Panc1 (cell line): ENCODE measurements at regions of chr3 and their contacts with region 1.

Region 1: DNA sequence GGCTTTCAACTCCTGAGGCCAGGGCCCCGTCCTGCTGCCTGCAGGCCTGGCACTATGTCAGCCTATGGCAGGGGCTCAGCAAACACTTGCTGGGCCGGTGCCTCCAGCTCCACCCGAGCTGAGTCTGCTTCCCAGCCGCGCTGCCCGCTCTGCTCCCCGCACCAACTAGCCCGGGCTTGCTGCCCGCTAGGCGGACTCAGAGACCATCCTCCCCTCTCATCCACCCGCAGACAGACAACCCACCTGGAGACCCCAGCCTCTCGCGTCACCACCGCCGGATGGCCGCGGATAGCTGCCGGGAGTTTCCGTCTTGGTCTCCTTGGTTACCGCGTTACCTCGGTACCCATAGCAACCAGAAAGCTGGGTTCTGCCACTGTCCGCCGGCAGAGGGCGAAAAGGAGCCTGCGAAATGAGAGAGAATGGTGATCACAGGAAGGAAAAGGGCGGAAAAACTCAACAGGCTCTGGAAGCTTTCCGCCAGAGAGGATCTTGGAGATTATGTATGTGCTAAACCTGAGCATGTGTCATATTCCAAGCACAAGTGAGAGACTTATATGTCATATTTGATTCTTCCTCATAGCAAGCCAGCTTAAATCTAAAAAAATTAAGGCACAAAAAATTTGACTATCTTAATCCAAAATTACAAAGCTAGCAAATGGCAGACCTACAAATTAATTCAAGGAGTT is at the start of gene ZBBX:
- DNase-seq: peak; percentile 67
- ATAC-seq: peak; percentile 98
- H3K4me3 ChIP-seq: peak within 1 kb of the TSS; percentile 37 to 39
- H3K27ac ChIP-seq: no peak within 1 kb of the TSS
- H3K4me1 ChIP-seq: no peaks in the 10 kb centered on the region
- H3K27me3 ChIP-seq: no peaks in the 10 kb centered on the region; the same call in 1 of the 2 replicates
- CTCF ChIP-seq: peak; percentile 95
- total RNA-seq, gene ZBBX: not detected

Region 2: DNA sequence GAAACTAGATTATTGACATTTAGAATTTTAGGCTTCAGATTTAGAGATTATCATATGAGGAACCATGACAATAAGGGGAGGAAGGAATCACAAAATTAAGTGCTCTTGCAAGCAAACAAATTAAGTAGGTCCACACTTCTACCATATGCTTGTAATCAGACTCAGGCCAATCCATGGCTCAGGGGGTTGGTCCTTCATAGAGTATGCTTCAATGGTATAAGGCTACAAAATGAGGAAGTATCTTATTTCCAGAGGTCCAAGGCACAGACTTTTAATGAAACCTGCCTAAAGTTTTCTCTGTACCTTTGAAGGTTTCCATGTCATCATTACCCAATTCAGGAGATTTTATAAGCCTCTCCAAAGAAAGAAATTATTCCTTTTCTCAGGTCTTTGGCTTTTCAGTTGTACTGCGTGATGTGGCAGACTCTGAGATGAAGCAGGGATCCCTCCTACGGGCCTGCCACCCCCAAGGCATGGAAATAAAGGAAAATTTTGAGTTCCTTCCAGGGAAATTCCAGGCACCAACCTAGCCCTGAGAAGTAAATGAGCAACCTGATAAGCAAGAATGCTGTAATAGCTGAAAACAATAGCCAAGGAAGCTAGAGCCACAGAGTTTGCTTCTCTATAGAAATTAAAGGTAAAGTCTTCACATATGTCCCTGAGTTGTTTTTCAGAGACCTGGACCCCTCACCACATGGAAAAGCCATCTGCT is 57.4 kb after region 1 on chr3:
- CTCF ChIA-PET with region 1: no interaction called
- POLR2A ChIA-PET with region 1: no interaction called
- in situ Hi-C with region 1: no loop called
- intact Hi-C with region 1: no loop called
- DNase-seq: no peak
- ATAC-seq: no peak
- H3K4me3 ChIP-seq: no peak overlapping the region
- H3K27ac ChIP-seq: no peak overlapping the region
- H3K4me1 ChIP-seq: no peaks in the 10 kb centered on the region
- H3K27me3 ChIP-seq: no peaks in the 10 kb centered on the region
- CTCF ChIP-seq: no peak

Region 3: DNA sequence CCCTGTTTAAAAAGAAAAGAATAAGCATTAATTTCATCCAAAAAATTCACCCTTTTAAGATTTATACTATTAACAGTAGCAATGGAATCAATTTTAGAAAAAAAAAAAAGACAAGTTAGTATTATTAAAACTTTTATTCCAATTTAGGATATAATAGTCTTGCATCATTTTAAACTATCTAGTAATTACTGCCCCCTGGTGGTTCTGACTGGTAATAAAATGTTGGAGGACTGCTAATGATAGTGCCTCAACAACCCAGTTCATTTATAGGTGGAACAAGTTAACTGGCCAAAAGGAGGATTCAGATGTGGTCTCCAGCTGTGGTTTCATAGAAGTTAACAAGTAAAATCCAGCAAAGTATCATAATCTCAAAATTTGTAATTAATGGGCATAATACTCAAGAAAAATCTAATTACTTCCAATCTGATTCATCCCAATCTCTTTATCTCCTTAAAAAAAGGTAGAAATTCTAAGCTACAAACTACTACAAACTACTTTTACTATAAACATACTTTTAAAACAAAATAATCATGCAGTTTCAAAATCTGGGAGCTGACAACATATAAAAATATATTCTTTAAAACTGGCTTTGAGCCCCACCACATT is 304.3 kb after region 1 on chr3:
- CTCF ChIA-PET with region 1: interaction called, 3 read pairs
- POLR2A ChIA-PET with region 1: no interaction called
- in situ Hi-C with region 1: no loop called
- intact Hi-C with region 1: loop called (anchors 2 kb)
- DNase-seq: peak; percentile 54
- ATAC-seq: peak; percentile 89
- H3K4me3 ChIP-seq: no peak overlapping the region
- H3K27ac ChIP-seq: no peak overlapping the region
- H3K4me1 ChIP-seq: no peaks in the 10 kb centered on the region
- H3K27me3 ChIP-seq: no peaks in the 10 kb centered on the region
- CTCF ChIP-seq: peak; percentile 79; the same call in 1 of the 2 replicates

Region 4: DNA sequence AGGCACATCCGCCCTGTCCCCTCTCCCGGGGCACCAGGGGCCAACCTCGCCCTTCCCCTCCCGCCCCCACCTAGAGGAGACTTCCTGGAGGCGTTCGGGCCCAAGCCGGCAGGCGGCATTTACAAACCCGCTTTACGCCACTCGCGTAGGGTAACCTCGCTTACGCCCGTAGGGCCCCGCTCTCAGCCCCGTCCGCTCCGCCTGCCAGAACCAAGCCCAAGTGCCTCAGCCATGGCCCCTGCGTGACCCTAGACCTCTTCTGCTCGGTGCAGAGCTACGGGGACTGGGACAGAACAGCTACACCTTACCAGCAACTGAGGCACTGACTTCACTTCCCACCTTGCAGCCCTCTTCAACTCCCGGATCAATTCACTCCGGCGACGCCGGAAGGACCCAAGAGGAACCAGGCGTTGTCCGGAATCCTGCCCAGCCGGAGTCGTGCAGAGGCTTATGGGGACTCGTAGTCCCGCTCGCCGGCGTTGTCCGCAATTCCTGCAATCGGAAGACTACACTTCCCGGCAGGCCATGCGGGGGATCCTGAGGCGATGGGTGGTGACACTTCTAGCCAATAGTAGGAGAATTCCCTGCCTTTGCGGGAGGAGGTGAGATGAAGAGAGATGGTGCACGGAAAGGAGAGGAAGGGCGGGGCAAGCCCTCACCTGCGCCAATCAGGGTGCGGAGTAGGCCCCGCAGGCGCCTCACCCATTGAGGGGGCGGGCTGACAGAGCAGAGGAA is 354.5 kb after region 1 on chr3 and contains the start of gene PDCD10:
- CTCF ChIA-PET with region 1: no interaction called
- POLR2A ChIA-PET with region 1: no interaction called
- in situ Hi-C with region 1: no loop called
- intact Hi-C with region 1: no loop called
- DNase-seq: peak; percentile 97
- ATAC-seq: peak; percentile 95
- H3K4me3 ChIP-seq: peak within 1 kb of the TSS; percentile 91 to 94
- H3K27ac ChIP-seq: peak within 1 kb of the TSS; percentile 94
- H3K4me1 ChIP-seq: peaks cover 37% of the 10 kb centered on the region
- H3K27me3 ChIP-seq: no peaks in the 10 kb centered on the region
- CTCF ChIP-seq: no peak
- total RNA-seq, gene PDCD10: 83.5 TPM

Region 5: DNA sequence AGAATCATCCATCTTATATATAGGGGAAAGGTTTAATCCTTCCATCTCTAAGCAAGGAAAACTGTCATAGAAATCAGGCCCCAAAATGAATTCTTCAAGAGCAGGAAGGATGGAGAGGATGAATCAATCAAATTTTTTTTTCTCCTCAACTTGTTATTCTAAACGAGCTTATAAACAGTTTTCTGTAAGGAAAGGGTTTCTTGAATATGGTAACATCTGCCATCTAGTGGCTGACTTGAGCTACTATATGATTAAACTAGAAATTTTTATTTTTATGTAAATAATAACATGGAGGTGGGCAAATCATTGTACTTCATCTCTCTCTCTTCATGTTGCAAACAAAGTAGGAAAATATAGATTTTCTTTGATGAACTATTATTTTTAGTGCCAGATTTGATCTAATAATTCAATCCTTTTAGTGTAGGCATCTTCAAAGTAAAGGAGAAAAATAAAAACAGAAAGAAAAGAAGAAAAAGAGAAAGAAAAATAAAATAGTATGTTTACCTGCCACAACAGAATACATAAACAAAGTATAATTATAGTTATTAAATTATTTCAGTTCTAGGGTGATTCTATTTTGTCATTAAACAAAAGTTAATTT is 502.0 kb after region 1 on chr3:
- CTCF ChIA-PET with region 1: interaction called, 5 read pairs
- POLR2A ChIA-PET with region 1: no interaction called
- in situ Hi-C with region 1: no loop called
- intact Hi-C with region 1: loop called (anchors 2 kb)
- DNase-seq: no peak
- ATAC-seq: peak; percentile 68; the same call in 1 of the 2 replicates
- H3K4me3 ChIP-seq: no peak overlapping the region
- H3K27ac ChIP-seq: no peak overlapping the region
- H3K4me1 ChIP-seq: no peaks in the 10 kb centered on the region; the same call in 1 of the 2 replicates
- H3K27me3 ChIP-seq: peaks cover 5% of the 10 kb centered on the region; the same call in 1 of the 2 replicates
- CTCF ChIP-seq: peak; percentile 71; the same call in 1 of the 2 replicates